Heart right ventricle (tissue), 16 donors: ENCODE measurements at regions of chr7 and their contacts with region 1.

Region 1: GRCh38 chr7:122803323-122803722 is 82.9 kb downstream of the CADPS2 start:
- DNase-seq: peak in 1 of 2 donors; percentile 16
- ATAC-seq: peak in 6 of 8 donors; percentile 25 to 76 (median 58)
- H3K4me3 ChIP-seq: no peak overlapping the region
- H3K27ac ChIP-seq: peak overlapping the region in 8 of 10 donors; percentile 43 to 76 (median 73)
- H3K4me1 ChIP-seq: peaks cover 0 to 32% (median 18%) of the 10 kb centered on the region in 9 donors
- H3K27me3 ChIP-seq: no peaks in the 10 kb centered on the region
- CTCF ChIP-seq: peak; percentile 25 to 76 (median 52)

Region 2: DNA sequence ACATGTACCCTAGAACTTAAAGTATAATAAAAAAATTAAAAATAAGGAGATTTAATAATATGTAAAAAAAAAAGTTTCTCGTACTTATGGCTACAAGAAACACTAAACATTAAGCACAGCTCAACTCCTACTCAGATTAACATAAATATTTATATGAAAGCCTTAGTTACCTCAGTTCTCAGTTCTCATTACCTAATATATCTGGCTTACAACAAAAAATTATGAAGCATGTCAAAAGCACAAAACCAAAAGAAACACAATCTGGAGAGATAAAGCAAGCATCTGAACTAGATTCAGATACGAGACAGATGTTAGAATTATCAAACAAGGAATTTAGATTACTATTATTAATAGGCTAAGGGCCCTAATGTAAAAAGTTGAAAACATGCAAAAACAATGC is 144.5 kb before region 1 on chr7:
- intact Hi-C with region 1: no loop called
- DNase-seq: no peak
- ATAC-seq: no peak
- H3K4me3 ChIP-seq: no peak overlapping the region
- H3K27ac ChIP-seq: no peak overlapping the region
- H3K4me1 ChIP-seq: no peaks in the 10 kb centered on the region
- H3K27me3 ChIP-seq: no peaks in the 10 kb centered on the region
- CTCF ChIP-seq: no peak

Region 3: DNA sequence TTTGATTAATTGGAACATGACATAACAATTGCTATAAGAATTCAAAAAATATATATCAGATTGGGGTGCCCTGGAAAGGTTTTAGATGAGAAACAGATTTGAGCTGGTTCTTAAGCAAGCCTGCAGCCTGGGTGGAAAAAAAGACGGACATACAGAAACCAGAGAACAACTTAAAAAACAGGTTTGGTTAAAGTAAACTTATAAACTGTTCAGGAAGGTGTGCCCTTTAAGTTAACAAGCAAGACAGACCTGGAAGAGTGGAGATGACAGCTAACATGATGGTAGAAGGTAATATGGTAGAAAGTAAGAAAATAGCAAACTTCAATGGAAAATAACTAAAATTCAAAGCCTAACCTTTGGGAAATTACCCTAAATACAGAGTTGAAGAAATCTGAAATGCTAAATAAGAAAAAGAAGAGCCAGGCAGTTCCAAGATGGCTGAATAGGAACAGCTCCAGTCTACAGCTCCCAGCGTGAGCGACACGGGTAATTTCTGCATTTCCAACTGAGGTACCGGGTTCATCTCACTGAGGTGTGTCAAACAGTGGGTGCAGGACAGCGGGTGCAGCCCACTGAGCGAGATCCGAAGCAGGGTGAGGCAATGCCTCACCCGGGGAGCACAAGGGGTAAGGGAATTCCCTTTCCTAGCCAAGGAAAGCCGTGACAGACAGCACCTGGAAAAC is 30.7 kb after region 1 on chr7:
- intact Hi-C with region 1: no loop called
- DNase-seq: no peak
- ATAC-seq: no peak
- H3K4me3 ChIP-seq: no peak overlapping the region
- H3K27ac ChIP-seq: no peak overlapping the region
- H3K4me1 ChIP-seq: peaks cover 0 to 5% (median 0%) of the 10 kb centered on the region in 9 donors
- H3K27me3 ChIP-seq: no peaks in the 10 kb centered on the region
- CTCF ChIP-seq: no peak

Region 4: GRCh38 chr7:122847871-122848473 is 44.6 kb after region 1 on chr7:
- intact Hi-C with region 1: loop called in 1 of 10 experiments (anchors 5 kb)
- DNase-seq: peak in 1 of 2 donors; percentile 28
- ATAC-seq: peak; percentile 57 to 89 (median 80)
- H3K4me3 ChIP-seq: no peak overlapping the region
- H3K27ac ChIP-seq: peak overlapping the region in 9 of 10 donors; percentile 0 to 79 (median 55)
- H3K4me1 ChIP-seq: peaks cover 3 to 48% (median 20%) of the 10 kb centered on the region in 9 donors
- H3K27me3 ChIP-seq: no peaks in the 10 kb centered on the region
- CTCF ChIP-seq: no peak